Vagina (tissue), 2 donors: ENCODE measurements at regions of chr16 and their contacts with region 1.

Region 1: DNA sequence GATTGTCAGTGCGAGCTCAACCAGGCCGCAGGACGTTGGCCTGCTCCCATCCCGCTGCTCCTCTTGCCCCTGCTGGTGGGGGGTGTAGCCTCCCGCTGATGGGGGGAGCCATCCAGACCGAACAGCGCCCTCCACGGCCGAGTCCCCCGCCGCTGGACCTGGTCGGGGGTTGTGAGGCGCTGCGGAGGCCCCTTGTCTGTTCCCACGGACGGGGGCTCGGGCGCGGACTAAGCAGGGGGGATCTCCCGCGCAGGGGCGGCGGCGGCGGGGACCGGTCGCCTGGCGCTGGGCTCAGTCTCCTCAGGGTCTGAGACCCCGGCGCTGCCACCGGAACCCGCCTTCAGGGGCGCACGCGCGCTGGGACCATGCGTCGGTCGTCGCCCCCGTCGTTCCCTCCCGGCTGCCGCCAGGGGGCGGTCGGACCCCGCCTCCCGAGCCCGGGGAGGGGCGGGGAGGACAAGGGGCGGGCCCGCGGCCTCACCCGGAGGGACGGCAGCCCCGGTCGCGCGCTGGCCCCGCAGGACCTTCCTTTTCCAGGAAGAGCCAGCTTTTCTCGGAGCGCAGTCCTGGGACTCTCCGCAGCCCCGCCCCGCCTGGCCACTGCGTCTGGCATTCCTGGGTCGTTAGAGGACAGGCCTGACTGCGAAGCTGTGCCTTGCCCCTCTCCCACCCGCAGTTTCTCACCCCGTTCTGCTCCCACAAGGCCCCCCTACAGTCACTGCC is 6.3 kb upstream of the IL32 start:
- DNase-seq: no peak
- H3K4me3 ChIP-seq: peak overlapping the region; percentile 78 to 80
- H3K27ac ChIP-seq: peak overlapping the region; percentile 76
- H3K4me1 ChIP-seq: peaks cover 19% of the 10 kb centered on the region
- H3K27me3 ChIP-seq: no peaks in the 10 kb centered on the region
- CTCF ChIP-seq: peak; percentile 92 to 96 (median 95)
- POLR2A ChIP-seq: no peak

Region 2: GRCh38 chr16:3038256-3038655 is 20.9 kb before region 1 on chr16:
- intact Hi-C with region 1: no loop called
- DNase-seq: no peak
- H3K4me3 ChIP-seq: no peak overlapping the region
- H3K27ac ChIP-seq: no peak overlapping the region
- H3K4me1 ChIP-seq: peaks cover 13% of the 10 kb centered on the region
- H3K27me3 ChIP-seq: peaks cover 10% of the 10 kb centered on the region
- CTCF ChIP-seq: no peak
- POLR2A ChIP-seq: no peak

Region 3: DNA sequence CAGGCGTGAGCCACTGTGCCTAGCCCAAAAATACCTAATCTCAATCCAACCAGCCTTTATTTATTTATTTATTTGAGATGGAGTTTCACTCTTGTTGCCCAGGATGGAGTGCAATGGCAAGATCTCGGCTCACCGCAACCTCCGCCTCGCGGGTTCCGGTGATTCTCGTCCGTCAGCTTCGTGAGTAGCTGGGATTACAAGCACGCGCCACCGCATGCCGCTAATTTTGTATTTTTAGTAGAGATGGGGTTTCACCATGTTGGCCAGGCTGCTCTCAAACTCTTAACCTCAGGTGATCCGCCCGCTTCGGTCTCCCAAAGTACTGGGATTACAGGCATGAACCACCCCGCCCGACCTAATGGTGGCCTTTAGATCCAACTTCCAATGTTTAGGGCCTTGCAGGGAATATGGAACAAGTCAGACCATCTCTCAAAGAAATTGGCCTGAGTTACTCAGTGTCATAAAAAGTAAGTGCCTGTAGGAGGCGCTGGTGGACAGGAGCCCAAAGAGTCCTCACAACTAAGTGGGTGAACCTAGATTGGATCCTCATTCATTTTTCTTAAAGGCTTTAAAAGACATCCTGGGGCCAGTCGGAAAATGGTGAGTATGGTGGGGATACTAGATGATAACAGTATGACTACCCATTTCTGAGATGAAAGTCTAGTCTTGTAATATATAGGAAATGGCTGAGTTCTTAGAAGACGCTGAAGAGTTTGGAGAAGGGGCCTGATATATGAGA is 35.3 kb after region 1 on chr16:
- intact Hi-C with region 1: no loop called
- DNase-seq: no peak
- H3K4me3 ChIP-seq: no peak overlapping the region
- H3K27ac ChIP-seq: no peak overlapping the region
- H3K4me1 ChIP-seq: no peaks in the 10 kb centered on the region
- H3K27me3 ChIP-seq: no peaks in the 10 kb centered on the region
- CTCF ChIP-seq: peak in 1 of 3 experiments; percentile 15
- POLR2A ChIP-seq: no peak

Region 4: DNA sequence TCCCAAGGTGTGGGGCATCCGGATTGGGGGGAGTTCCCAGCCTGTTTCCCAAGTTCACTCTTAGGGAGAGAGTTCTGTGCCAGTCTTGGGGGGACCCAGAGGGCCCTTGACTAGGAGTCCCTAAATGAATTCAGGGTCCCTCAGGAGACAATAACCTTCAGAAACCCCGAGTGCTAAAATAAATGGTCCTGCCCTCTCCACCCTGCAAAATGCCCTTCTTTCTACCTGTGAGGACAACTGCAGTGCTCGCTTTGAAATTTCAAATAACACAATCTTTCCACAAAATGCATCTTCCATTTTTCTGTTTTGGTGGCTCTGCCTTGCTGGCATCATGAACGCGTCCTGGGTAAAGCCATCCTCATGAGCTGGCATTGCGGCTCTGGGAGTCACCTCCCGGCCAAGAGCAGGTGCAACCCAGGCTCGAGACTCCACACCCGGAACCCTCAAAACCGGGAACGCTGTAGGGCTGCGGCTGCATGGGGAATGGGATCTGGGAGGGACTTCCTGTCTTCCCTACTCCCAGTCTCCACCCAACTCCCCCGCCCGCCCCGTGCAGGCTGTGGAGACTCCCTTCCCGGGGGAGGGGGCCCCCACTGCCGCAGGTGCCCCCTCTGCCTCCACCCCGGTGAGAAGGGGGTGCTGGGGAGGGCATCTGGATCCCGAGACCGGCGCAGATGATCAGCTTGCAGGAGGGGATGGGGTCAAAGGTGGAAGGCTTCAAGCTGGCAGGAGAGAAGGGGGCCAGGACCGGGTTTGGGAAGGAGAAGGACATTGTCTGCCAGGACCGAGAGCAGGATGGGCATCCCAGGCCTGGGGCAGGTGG is 53.1 kb after region 1 on chr16 and contains the start of gene ZNF205:
- intact Hi-C with region 1: loop called (anchors 5 kb)
- DNase-seq: no peak
- H3K4me3 ChIP-seq: peak within 1 kb of the TSS; percentile 72 to 88
- H3K27ac ChIP-seq: peak within 1 kb of the TSS; percentile 42
- H3K4me1 ChIP-seq: peaks cover 32% of the 10 kb centered on the region
- H3K27me3 ChIP-seq: no peaks in the 10 kb centered on the region
- CTCF ChIP-seq: no peak
- POLR2A ChIP-seq: no peak
- total RNA-seq, gene ZNF205: 14.2 TPM

Region 5: GRCh38 chr16:3134564-3135417 is 75.6 kb after region 1 on chr16 and contains the start of gene ZNF213:
- intact Hi-C with region 1: no loop called
- DNase-seq: peak in 1 of 2 donors; percentile 98
- H3K4me3 ChIP-seq: peak within 1 kb of the TSS; percentile 78 to 82
- H3K27ac ChIP-seq: peak within 1 kb of the TSS; percentile 87
- H3K4me1 ChIP-seq: peaks cover 25% of the 10 kb centered on the region
- H3K27me3 ChIP-seq: no peaks in the 10 kb centered on the region
- CTCF ChIP-seq: peak in 2 of 3 experiments; percentile 3 to 6
- POLR2A ChIP-seq: peak in 1 of 2 donors; percentile 92
- total RNA-seq, gene ZNF213: 7.6 TPM

Region 6: GRCh38 chr16:3161136-3162018 is 102.2 kb after region 1 on chr16:
- intact Hi-C with region 1: loop called (anchors 5 kb)
- DNase-seq: no peak
- H3K4me3 ChIP-seq: no peak overlapping the region
- H3K27ac ChIP-seq: no peak overlapping the region
- H3K4me1 ChIP-seq: peaks cover 22% of the 10 kb centered on the region
- H3K27me3 ChIP-seq: no peaks in the 10 kb centered on the region
- CTCF ChIP-seq: no peak
- POLR2A ChIP-seq: no peak